ENCODE measurements at regions of chr1 and their contacts with region 1.

Region 1: DNA sequence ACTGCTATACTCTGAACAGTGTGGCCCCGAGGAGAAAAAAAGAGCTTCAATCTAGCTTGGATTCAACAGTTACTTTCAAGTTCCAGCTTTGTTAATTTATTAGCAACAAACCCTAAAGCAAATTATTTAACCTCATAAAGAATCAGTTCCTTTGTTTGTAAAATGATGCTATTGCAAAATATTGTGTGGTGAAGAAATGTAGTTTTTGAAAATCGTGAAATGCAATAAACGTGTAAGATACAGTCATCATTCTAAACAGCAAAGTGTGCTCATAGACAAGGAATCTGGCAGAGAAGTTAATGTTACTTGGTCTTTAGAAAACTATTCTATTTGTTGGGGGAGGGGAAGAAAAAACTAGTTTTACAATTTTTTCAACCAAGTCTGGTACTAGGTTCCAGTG is 297.6 kb upstream of the ADGRL4 start:
- DNase-seq: no peak
- ATAC-seq: no peak

Region 2: GRCh38 chr1:79010589-79010988 is 293.5 kb before region 1 on chr1:
- intact Hi-C with region 1: no loop called
- DNase-seq: no peak
- ATAC-seq: no peak

Region 3: DNA sequence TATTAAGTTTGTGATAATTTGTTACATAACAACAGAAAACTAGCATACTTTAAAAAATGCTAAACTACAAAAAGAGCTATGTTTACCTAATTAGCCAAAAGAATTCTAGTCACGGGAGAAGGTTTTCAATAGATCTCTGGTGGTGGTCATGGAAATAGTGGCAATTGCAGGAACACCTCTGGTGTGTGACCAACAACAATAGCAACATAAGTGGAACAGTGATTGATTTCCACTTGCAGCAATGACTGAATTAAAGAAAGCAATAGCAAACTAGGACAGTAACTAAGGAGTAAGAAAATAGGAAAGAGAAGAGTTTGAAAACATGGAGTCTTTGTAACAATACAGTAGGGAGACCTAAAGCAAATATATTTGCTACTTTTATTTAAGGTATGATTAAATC is 126.3 kb before region 1 on chr1:
- intact Hi-C with region 1: no loop called
- DNase-seq: no peak
- ATAC-seq: no peak

Region 4: GRCh38 chr1:79271759-79272158 is 32.4 kb before region 1 on chr1:
- intact Hi-C with region 1: loop called (anchors 2 kb)
- DNase-seq: no peak
- ATAC-seq: no peak